Prostate gland (tissue), 2 donors: ENCODE measurements at regions of chr3 and their contacts with region 1.

Region 1: DNA sequence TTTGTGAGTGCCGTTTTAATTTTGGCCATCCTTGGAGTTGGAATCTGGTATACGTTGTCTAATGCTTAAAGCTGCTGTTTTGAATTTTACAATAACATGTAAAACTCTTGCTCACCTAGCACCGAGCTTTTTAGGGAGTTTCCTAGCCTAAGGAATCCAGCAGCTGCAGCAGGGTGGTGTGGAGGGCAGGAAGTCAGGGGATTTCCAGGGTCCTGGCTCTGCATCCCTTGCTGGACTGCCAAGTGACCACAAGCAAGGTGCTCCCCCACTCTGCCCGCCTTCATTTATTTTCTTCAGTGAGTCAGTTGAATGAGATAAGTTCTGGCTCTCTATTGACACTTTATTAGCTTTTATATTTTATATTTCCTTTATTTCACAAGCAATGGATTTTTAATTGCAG is 113.7 kb downstream of the ATG7 start:
- DNase-seq: no peak
- H3K4me3 ChIP-seq: no peak overlapping the region
- H3K27ac ChIP-seq: no peak overlapping the region
- H3K4me1 ChIP-seq: no peaks in the 10 kb centered on the region
- H3K27me3 ChIP-seq: no peaks in the 10 kb centered on the region
- CTCF ChIP-seq: no peak
- POLR2A ChIP-seq: no peak

Region 2: DNA sequence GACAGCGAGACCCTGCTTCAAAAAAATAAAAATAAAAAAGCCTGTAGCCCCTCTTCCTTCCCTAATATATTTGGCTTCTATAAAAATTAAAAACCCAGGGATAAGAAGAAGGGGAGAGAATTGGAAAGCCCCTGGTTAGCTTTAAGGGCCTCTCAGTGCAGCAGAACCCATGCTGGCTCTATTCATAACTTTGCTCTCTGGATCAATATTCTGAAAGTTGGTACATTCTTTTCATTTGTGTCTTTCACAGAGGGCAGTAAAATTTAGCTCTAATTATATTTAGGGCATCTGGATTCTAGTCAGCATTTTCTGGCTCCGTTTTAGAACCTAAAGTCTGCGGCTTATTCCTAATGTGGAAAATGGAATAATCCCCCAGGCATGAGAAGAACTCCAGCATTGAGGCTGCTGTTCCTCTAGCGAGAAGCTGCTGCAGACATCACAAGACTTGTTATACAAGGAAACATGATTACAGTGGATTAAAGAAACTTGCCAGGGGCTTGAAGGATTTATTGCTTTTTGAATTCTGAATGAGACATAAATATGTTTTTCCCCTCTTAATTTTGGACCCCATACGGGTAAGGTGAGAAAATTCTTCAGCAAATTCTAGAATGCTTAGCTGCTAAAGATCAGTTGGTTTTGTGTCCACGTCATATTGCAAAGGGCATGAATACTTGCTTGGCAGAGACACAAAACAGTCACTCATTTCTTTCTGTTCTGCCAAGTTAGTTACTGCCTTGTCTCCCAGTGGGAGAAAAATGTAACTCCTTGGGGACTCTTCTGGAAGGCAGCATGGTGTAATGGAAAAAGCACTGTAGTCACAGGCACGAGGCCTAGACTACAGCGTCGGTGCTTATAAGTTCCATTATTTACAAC is 80.1 kb after region 1 on chr3:
- intact Hi-C with region 1: loop called (anchors 10 kb)
- DNase-seq: peak; percentile 13
- H3K4me3 ChIP-seq: no peak overlapping the region
- H3K27ac ChIP-seq: peak overlapping the region; percentile 37 to 59
- H3K4me1 ChIP-seq: no peaks in the 10 kb centered on the region
- H3K27me3 ChIP-seq: no peaks in the 10 kb centered on the region
- CTCF ChIP-seq: no peak
- POLR2A ChIP-seq: no peak

Region 3: DNA sequence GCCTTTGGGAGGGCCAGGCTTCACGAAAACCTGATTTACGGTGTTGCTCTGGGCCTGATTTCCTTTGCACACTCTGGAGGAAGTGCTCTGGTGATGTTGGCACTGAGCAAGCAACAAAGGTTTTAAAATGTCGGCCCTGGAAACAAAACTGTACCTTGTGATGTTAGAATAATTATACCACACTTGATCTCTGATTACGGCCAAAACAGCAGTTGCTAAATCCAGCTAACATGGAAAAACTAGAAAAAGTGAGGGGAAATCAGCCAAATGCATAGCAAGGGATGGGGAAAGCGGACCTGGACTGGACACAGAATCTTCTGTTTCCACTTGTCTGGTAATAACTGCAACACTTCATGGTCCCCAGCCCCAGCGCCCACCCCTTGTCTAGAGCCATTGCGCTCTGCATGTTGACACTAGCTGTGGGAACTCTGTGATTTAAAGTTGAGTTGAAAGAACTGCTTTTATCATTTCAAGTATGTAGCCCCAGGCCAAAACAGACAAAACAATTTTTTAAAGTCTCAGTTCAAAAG is 137.7 kb after region 1 on chr3:
- intact Hi-C with region 1: loop called (anchors 10 kb)
- DNase-seq: no peak
- H3K4me3 ChIP-seq: no peak overlapping the region
- H3K27ac ChIP-seq: peak overlapping the region; percentile 4 to 27
- H3K4me1 ChIP-seq: no peaks in the 10 kb centered on the region
- H3K27me3 ChIP-seq: no peaks in the 10 kb centered on the region
- CTCF ChIP-seq: no peak
- POLR2A ChIP-seq: no peak

Region 4: GRCh38 chr3:11719406-11720230 is 333.7 kb after region 1 on chr3:
- intact Hi-C with region 1: loop called (anchors 10 kb)
- DNase-seq: peak; percentile 96
- H3K4me3 ChIP-seq: peak overlapping the region; percentile 84 to 95
- H3K27ac ChIP-seq: peak overlapping the region; percentile 94 to 96
- H3K4me1 ChIP-seq: no peaks in the 10 kb centered on the region
- H3K27me3 ChIP-seq: no peaks in the 10 kb centered on the region
- CTCF ChIP-seq: no peak
- POLR2A ChIP-seq: peak; percentile 79